Naive thymus-derived CD8-positive, alpha-beta T cell (primary cell): ENCODE measurements at regions of chr10 and their contacts with region 1.

Region 1: DNA sequence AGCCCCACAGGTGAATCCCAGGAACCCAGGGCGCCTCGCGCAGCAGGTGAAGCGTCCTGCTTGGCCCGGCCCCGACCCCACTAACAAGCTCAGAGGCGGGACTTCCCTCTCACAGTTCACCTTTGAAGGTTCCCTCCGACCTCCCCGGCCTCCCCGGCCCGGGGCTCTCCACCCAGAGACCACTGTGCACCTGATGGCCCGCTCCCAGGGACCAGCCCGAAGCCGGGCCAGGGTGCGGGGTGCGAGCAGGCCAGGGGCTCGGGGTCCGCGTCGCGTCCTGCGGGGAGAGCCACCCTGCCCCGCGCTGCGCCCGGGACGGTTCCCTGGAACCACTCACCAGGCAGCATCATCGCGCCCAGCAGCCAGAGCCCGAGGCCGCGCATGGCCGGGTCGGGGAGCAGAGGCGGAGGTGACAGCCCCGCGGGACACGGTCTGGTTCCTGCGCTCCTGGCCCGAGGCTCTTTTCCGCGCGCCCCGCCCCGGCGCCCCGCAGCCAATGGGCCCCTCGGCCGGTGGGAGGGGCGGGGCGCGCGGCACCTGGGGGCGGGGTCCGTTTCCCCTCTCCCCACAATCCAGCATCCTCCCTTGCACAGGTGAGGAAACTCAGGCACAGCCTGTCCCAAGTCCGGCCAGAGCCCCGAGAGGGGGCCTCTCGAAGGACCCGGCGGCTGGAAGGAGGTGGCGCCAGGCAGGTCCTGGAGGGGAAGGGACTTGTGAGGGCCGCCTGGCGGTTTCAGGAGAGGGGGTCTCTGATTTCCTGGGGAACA is at the start of gene ADAM8:
- DNase-seq: peak in 9 of 10 donors; percentile 33 to 71 (median 47)
- ATAC-seq: peak; percentile 29 to 53
- H3K4me3 Mint-ChIP-seq: peak within 1 kb of the TSS; percentile 79 to 88 (median 85)
- H3K27ac Mint-ChIP-seq: peak within 1 kb of the TSS; percentile 43 to 99 (median 90)
- H3K4me1 Mint-ChIP-seq: peaks cover 4 to 45% (median 34%) of the 10 kb centered on the region in 4 donors
- H3K27me3 Mint-ChIP-seq: no peaks in the 10 kb centered on the region
- polyA plus RNA-seq, gene ADAM8: 7.8 to 28.4 (median 9.5) TPM

Region 2: DNA sequence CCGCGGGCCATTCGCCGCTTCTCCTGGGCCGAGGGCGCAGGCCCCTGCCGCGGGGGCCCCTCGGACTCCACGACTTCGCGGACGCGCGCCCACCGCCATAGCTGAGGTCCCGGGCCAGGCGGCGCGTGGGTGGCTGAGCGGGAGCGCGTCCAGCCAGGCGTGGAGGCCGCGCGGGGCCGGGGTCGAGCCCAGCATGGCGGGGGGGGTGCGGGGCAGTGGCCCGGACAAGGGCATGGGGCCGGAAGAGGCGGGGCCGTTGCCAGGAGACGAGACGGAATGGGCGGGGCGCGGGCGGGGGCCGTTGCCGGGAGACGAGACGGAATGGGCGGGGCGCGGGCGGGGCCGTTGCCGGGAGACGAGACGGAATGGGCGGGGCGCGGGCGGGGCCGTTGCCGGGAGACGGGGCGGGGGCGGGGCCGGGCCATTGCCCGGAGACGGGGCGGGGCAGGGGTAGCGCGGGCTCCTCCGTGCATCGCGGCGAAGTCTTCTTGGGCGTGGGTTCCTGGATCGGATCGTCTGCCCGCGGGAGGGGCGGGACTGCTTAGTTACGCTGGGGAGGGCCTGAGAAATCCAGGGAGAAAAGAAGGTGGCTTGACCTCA is 14.8 kb before region 1 on chr10:
- POLR2A ChIA-PET with region 1: interaction called, 39 read pairs
- DNase-seq: peak; percentile 62 to 92 (median 75)
- ATAC-seq: peak; percentile 38 to 45
- H3K4me3 Mint-ChIP-seq: peak overlapping the region; percentile 71 to 87 (median 77)
- H3K27ac Mint-ChIP-seq: peak overlapping the region in 9 of 10 donors; percentile 74 to 95 (median 86)
- H3K4me1 Mint-ChIP-seq: peaks cover 17 to 74% (median 67%) of the 10 kb centered on the region in 4 donors
- H3K27me3 Mint-ChIP-seq: no peaks in the 10 kb centered on the region

Region 3: GRCh38 chr10:133292919-133293809 is 16.5 kb after region 1 on chr10:
- POLR2A ChIA-PET with region 1: no interaction called
- DNase-seq: no peak
- ATAC-seq: no peak
- H3K4me3 Mint-ChIP-seq: no peak overlapping the region
- H3K27ac Mint-ChIP-seq: no peak overlapping the region
- H3K4me1 Mint-ChIP-seq: peaks cover 0 to 3% (median 1%) of the 10 kb centered on the region in 4 donors
- H3K27me3 Mint-ChIP-seq: no peaks in the 10 kb centered on the region